Activated B cell treated with CpG ODN at 0.5 μM for 24 hours (primary cell): ENCODE measurements at regions of chr1 and their contacts with region 1.

Region 1: GRCh38 chr1:86887479-86888162 is 26.3 kb downstream of the SELENOF start:
- DNase-seq: no peak
- ATAC-seq: no peak
- H3K4me3 Mint-ChIP-seq: no peak overlapping the region
- H3K27ac Mint-ChIP-seq: peak overlapping the region; percentile 35
- H3K4me1 Mint-ChIP-seq: peaks cover 36% of the 10 kb centered on the region
- H3K27me3 Mint-ChIP-seq: no peaks in the 10 kb centered on the region
- CTCF ChIP-seq: no peak

Region 2: DNA sequence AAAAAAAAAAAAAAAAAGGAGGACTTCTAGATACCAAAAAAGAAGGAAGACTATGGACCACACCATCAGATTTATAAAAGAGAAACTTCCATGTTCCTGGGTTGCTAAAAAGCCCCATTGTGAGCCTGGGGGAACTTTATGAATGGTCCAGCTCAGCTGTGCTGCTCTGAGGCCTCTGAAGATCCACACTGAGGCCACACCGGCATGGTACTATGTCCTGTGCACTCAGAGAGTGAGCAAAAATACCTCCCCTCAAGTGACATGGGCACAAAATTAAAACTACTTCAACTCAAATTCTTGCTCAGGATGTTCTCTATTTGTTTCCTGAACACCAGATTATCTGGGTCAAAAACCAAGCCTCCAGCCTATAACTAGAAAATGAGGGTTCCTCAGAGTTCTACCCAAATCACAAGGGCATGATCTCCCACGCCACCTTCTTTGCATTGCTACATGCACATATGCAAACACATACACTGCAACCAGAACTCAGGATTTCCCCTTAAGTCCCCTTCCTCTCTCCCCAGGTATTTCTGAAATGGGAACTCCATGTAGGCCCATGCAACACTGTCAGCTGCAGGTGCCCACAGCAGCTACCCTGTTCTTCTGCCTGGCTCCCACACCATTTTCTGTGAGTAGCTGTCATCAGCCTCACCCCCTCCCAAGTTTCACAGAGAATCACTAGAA is 88.9 kb before region 1 on chr1:
- CTCF ChIA-PET with region 1: no interaction called
- POLR2A ChIA-PET with region 1: no interaction called
- intact Hi-C with region 1: no loop called
- DNase-seq: no peak
- ATAC-seq: peak; percentile 86
- H3K4me3 Mint-ChIP-seq: peak overlapping the region; percentile 69
- H3K27ac Mint-ChIP-seq: peak overlapping the region; percentile 86
- H3K4me1 Mint-ChIP-seq: peaks cover 29% of the 10 kb centered on the region
- H3K27me3 Mint-ChIP-seq: no peaks in the 10 kb centered on the region
- CTCF ChIP-seq: no peak

Region 3: DNA sequence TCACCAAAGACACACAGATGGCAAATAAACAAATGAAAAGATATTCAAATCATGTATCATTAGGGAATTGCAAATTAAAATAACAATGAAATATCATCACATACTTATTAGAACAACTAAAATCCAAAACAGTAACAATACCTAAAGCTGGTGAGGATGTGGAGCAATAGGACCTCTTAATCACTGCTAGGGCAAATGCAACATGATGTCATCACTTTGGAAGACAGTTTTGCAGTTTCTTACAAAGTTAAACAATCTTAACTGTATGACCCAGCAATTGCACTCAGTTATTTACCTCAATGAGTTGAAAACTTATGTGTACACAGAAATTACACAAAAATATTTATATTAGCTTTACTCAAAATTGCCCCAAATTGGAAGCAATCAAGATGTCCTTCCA is 21.0 kb before region 1 on chr1:
- CTCF ChIA-PET with region 1: no interaction called
- POLR2A ChIA-PET with region 1: no interaction called
- intact Hi-C with region 1: loop called (anchors 2 kb)
- DNase-seq: no peak
- ATAC-seq: peak; percentile 5
- H3K4me3 Mint-ChIP-seq: peak overlapping the region; percentile 65
- H3K27ac Mint-ChIP-seq: peak overlapping the region; percentile 87
- H3K4me1 Mint-ChIP-seq: peaks cover 44% of the 10 kb centered on the region
- H3K27me3 Mint-ChIP-seq: no peaks in the 10 kb centered on the region
- CTCF ChIP-seq: no peak

Region 4: GRCh38 chr1:86875722-86876121 is 11.9 kb before region 1 on chr1:
- CTCF ChIA-PET with region 1: no interaction called
- POLR2A ChIA-PET with region 1: no interaction called
- intact Hi-C with region 1: loop called (anchors 2 kb)
- DNase-seq: no peak
- ATAC-seq: no peak
- H3K4me3 Mint-ChIP-seq: no peak overlapping the region
- H3K27ac Mint-ChIP-seq: peak overlapping the region; percentile 36
- H3K4me1 Mint-ChIP-seq: peaks cover 7% of the 10 kb centered on the region
- H3K27me3 Mint-ChIP-seq: no peaks in the 10 kb centered on the region
- CTCF ChIP-seq: no peak